ENCODE measurements at regions of chr1 and their contacts with region 1.

Region 1: GRCh38 chr1:248622570-248623001 is 12.3 kb downstream of the OR2T11 start:
- DNase-seq: no peak
- H3K4me3 ChIP-seq: no peak overlapping the region
- H3K27ac ChIP-seq: no peak overlapping the region
- H3K4me1 ChIP-seq: no peaks in the 10 kb centered on the region
- H3K27me3 ChIP-seq: no peaks in the 10 kb centered on the region
- CTCF ChIP-seq: peak; percentile 50

Region 2: GRCh38 chr1:248686815-248687214 is 64.2 kb after region 1 on chr1:
- intact Hi-C with region 1: loop called (anchors 5 kb)
- DNase-seq: no peak
- H3K4me3 ChIP-seq: no peak overlapping the region
- H3K27ac ChIP-seq: no peak overlapping the region
- H3K4me1 ChIP-seq: no peaks in the 10 kb centered on the region
- H3K27me3 ChIP-seq: no peaks in the 10 kb centered on the region
- CTCF ChIP-seq: peak; percentile 38

Measured in colonic mucosa (tissue), 4 donors.